CD4-positive, alpha-beta T cell (primary cell): ENCODE measurements at regions of chr11 and their contacts with region 1.

Region 1: GRCh38 chr11:72483412-72484186 is 49.3 kb upstream of the CLPB start:
- DNase-seq: peak in 3 of 14 experiments; percentile 21 to 71 (median 61)
- ATAC-seq: no peak
- H3K4me3 ChIP-seq: no peak overlapping the region
- H3K4me3 Mint-ChIP-seq: no peak overlapping the region
- H3K27ac ChIP-seq: no peak overlapping the region
- H3K27ac Mint-ChIP-seq: no peak overlapping the region
- H3K4me1 ChIP-seq: peaks cover 14% of the 10 kb centered on the region
- H3K4me1 Mint-ChIP-seq: no peaks in the 10 kb centered on the region
- H3K27me3 ChIP-seq: no peaks in the 10 kb centered on the region
- H3K27me3 Mint-ChIP-seq: peaks cover 18% of the 10 kb centered on the region
- CTCF ChIP-seq: no peak

Region 2: GRCh38 chr11:72573072-72573854 is 89.7 kb after region 1 on chr11:
- CTCF ChIA-PET with region 1: no interaction called
- POLR2A ChIA-PET with region 1: no interaction called
- intact Hi-C with region 1: loop called (anchors 1 kb)
- DNase-seq: peak in 7 of 14 experiments; percentile 11 to 63 (median 33)
- ATAC-seq: peak; percentile 48
- H3K4me3 ChIP-seq: no peak overlapping the region
- H3K4me3 Mint-ChIP-seq: no peak overlapping the region
- H3K27ac ChIP-seq: no peak overlapping the region
- H3K27ac Mint-ChIP-seq: no peak overlapping the region
- H3K4me1 ChIP-seq: no peaks in the 10 kb centered on the region
- H3K4me1 Mint-ChIP-seq: no peaks in the 10 kb centered on the region
- H3K27me3 ChIP-seq: no peaks in the 10 kb centered on the region
- H3K27me3 Mint-ChIP-seq: peaks cover 25% of the 10 kb centered on the region
- CTCF ChIP-seq: no peak

Region 3: GRCh38 chr11:72683782-72684200 is 200.2 kb after region 1 on chr11:
- CTCF ChIA-PET with region 1: interaction called, 5 read pairs
- POLR2A ChIA-PET with region 1: no interaction called
- intact Hi-C with region 1: loop called in 1 of 2 experiments (anchors 1 kb)
- DNase-seq: peak; percentile 49 to 76 (median 60)
- ATAC-seq: peak; percentile 86
- H3K4me3 ChIP-seq: no peak overlapping the region
- H3K4me3 Mint-ChIP-seq: no peak overlapping the region
- H3K27ac ChIP-seq: no peak overlapping the region
- H3K27ac Mint-ChIP-seq: no peak overlapping the region
- H3K4me1 ChIP-seq: peaks cover 4% of the 10 kb centered on the region
- H3K4me1 Mint-ChIP-seq: peaks cover 12% of the 10 kb centered on the region
- H3K27me3 ChIP-seq: no peaks in the 10 kb centered on the region
- H3K27me3 Mint-ChIP-seq: no peaks in the 10 kb centered on the region
- CTCF ChIP-seq: peak; percentile 88